Prostate gland (tissue), 2 donors: ENCODE measurements at regions of chr6 and their contacts with region 1.

Region 1: GRCh38 chr6:168355716-168356449 is 36.3 kb upstream of the DACT2 start:
- DNase-seq: peak; percentile 64
- H3K4me3 ChIP-seq: no peak overlapping the region
- H3K27ac ChIP-seq: no peak overlapping the region
- H3K4me1 ChIP-seq: no peaks in the 10 kb centered on the region
- H3K27me3 ChIP-seq: no peaks in the 10 kb centered on the region
- CTCF ChIP-seq: peak; percentile 42 to 94 (median 84)
- POLR2A ChIP-seq: no peak

Region 2: GRCh38 chr6:168150551-168151320 is 205.1 kb before region 1 on chr6:
- intact Hi-C with region 1: loop called (anchors 2 kb)
- DNase-seq: peak; percentile 39
- H3K4me3 ChIP-seq: no peak overlapping the region
- H3K27ac ChIP-seq: no peak overlapping the region
- H3K4me1 ChIP-seq: no peaks in the 10 kb centered on the region
- H3K27me3 ChIP-seq: no peaks in the 10 kb centered on the region
- CTCF ChIP-seq: peak; percentile 28 to 88 (median 70)
- POLR2A ChIP-seq: no peak

Region 3: GRCh38 chr6:168451805-168452517 is 96.1 kb after region 1 on chr6:
- intact Hi-C with region 1: no loop called
- DNase-seq: no peak
- H3K4me3 ChIP-seq: no peak overlapping the region
- H3K27ac ChIP-seq: peak overlapping the region; percentile 7 to 35
- H3K4me1 ChIP-seq: no peaks in the 10 kb centered on the region
- H3K27me3 ChIP-seq: no peaks in the 10 kb centered on the region
- CTCF ChIP-seq: peak in 1 of 4 experiments; percentile 41
- POLR2A ChIP-seq: no peak

Region 4: GRCh38 chr6:168616816-168617765 is 261.2 kb after region 1 on chr6:
- intact Hi-C with region 1: no loop called
- DNase-seq: no peak
- H3K4me3 ChIP-seq: no peak overlapping the region
- H3K27ac ChIP-seq: no peak overlapping the region
- H3K4me1 ChIP-seq: no peaks in the 10 kb centered on the region
- H3K27me3 ChIP-seq: no peaks in the 10 kb centered on the region
- CTCF ChIP-seq: peak in 3 of 4 experiments; percentile 8 to 53 (median 14)
- POLR2A ChIP-seq: no peak